Naive thymus-derived CD4-positive, alpha-beta T cell (primary cell): ENCODE measurements at regions of chr15 and their contacts with region 1.

Region 1: GRCh38 chr15:63600616-63601025 is 3.4 kb downstream of the FBXL22 start:
- DNase-seq: peak; percentile 85 to 95 (median 90)
- ATAC-seq: peak; percentile 93
- H3K4me3 ChIP-seq: peak overlapping the region; percentile 95
- H3K4me3 Mint-ChIP-seq: peak overlapping the region; percentile 91 to 99 (median 94)
- H3K27ac ChIP-seq: peak overlapping the region; percentile 80
- H3K27ac Mint-ChIP-seq: peak overlapping the region; percentile 90 to 96 (median 93)
- H3K4me1 ChIP-seq: peaks cover 22 to 27% of the 10 kb centered on the region in 2 donors
- H3K4me1 Mint-ChIP-seq: peaks cover 39 to 70% (median 66%) of the 10 kb centered on the region in 7 donors
- H3K27me3 ChIP-seq: no peaks in the 10 kb centered on the region
- H3K27me3 Mint-ChIP-seq: no peaks in the 10 kb centered on the region

Region 2: GRCh38 chr15:63277038-63277892 is 323.4 kb before region 1 on chr15 and contains the start of gene APH1B:
- CTCF ChIA-PET with region 1: no interaction called
- POLR2A ChIA-PET with region 1: no interaction called
- intact Hi-C with region 1: loop called (anchors 5 to 10 kb)
- DNase-seq: peak; percentile 62 to 80 (median 74)
- ATAC-seq: peak; percentile 92
- H3K4me3 ChIP-seq: peak within 1 kb of the TSS; percentile 71
- H3K4me3 Mint-ChIP-seq: peak within 1 kb of the TSS; percentile 78 to 93 (median 89)
- H3K27ac ChIP-seq: peak within 1 kb of the TSS; percentile 96
- H3K27ac Mint-ChIP-seq: peak within 1 kb of the TSS; percentile 75 to 98 (median 86)
- H3K4me1 ChIP-seq: peaks cover 10 to 21% of the 10 kb centered on the region in 2 donors
- H3K4me1 Mint-ChIP-seq: peaks cover 23 to 49% (median 46%) of the 10 kb centered on the region in 7 donors
- H3K27me3 ChIP-seq: no peaks in the 10 kb centered on the region
- H3K27me3 Mint-ChIP-seq: no peaks in the 10 kb centered on the region
- total RNA-seq, gene APH1B: 9.9 to 29.9 (median 17.6) TPM

Region 3: GRCh38 chr15:63473999-63474809 is 126.4 kb before region 1 on chr15:
- CTCF ChIA-PET with region 1: interaction called, 5 read pairs
- POLR2A ChIA-PET with region 1: interaction called, 12 read pairs
- intact Hi-C with region 1: loop called in 1 of 2 experiments (anchors 1 kb)
- DNase-seq: peak in 5 of 9 donors; percentile 36 to 76 (median 51)
- ATAC-seq: peak; percentile 86
- H3K4me3 ChIP-seq: no peak overlapping the region
- H3K4me3 Mint-ChIP-seq: peak overlapping the region in 8 of 10 donors; percentile 44 to 75 (median 65)
- H3K27ac ChIP-seq: peak overlapping the region; percentile 50
- H3K27ac Mint-ChIP-seq: peak overlapping the region; percentile 86 to 98 (median 94)
- H3K4me1 ChIP-seq: peaks cover 11 to 44% of the 10 kb centered on the region in 2 donors
- H3K4me1 Mint-ChIP-seq: peaks cover 32 to 70% (median 61%) of the 10 kb centered on the region in 7 donors
- H3K27me3 ChIP-seq: no peaks in the 10 kb centered on the region
- H3K27me3 Mint-ChIP-seq: no peaks in the 10 kb centered on the region

Region 4: GRCh38 chr15:63582718-63583426 is 17.7 kb before region 1 on chr15:
- CTCF ChIA-PET with region 1: interaction called, 5 read pairs
- POLR2A ChIA-PET with region 1: interaction called, 4 read pairs
- intact Hi-C with region 1: loop called in 1 of 2 experiments (anchors 2 kb)
- DNase-seq: no peak
- ATAC-seq: peak; percentile 10
- H3K4me3 ChIP-seq: no peak overlapping the region
- H3K4me3 Mint-ChIP-seq: no peak overlapping the region
- H3K27ac ChIP-seq: no peak overlapping the region
- H3K27ac Mint-ChIP-seq: peak overlapping the region in 8 of 9 donors; percentile 8 to 91 (median 64)
- H3K4me1 ChIP-seq: no peaks in the 10 kb centered on the region
- H3K4me1 Mint-ChIP-seq: peaks cover 8 to 34% (median 19%) of the 10 kb centered on the region in 7 donors
- H3K27me3 ChIP-seq: no peaks in the 10 kb centered on the region
- H3K27me3 Mint-ChIP-seq: no peaks in the 10 kb centered on the region

Region 5: DNA sequence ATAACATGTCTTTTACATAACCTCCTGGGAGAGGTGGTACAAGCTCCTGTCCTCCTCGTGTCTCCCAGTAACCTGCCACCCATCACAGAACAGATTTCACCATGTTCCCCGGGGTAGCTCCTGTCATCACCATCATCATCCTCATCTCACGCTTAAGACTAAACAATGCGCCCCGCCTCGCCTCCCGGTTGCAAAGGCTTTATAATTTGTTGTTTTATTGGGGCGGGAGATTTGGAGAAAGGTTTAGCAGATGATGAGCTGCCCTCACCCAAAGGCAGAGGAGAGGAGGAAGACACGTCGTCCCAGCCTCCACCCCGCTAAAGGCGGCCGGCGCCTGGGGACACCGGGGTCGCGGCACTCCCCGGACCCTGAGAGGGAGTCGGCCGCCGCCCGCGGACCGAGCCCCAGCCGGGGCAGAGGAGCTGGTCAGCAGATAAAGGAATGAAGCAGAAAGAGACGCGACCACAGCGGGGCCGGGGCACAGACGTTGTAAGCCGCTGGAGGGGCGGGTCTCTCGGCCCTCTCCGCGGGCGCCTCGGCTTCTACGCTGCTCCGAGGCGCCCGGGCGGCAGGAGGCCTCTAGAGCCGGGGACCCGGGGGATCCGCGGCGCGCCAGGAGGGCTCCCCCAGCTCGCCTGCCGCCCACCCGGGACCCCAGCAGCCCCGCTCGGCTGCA is 232.5 kb after region 1 on chr15:
- CTCF ChIA-PET with region 1: no interaction called
- POLR2A ChIA-PET with region 1: no interaction called
- intact Hi-C with region 1: loop called (anchors 5 kb)
- DNase-seq: peak; percentile 11 to 55 (median 38)
- ATAC-seq: peak; percentile 48
- H3K4me3 ChIP-seq: peak overlapping the region; percentile 68
- H3K4me3 Mint-ChIP-seq: peak overlapping the region; percentile 86 to 98 (median 94)
- H3K27ac ChIP-seq: peak overlapping the region; percentile 99
- H3K27ac Mint-ChIP-seq: peak overlapping the region; percentile 94 to 99 (median 97)
- H3K4me1 ChIP-seq: peaks cover 30 to 31% of the 10 kb centered on the region in 2 donors
- H3K4me1 Mint-ChIP-seq: peaks cover 46 to 66% (median 56%) of the 10 kb centered on the region in 7 donors
- H3K27me3 ChIP-seq: no peaks in the 10 kb centered on the region
- H3K27me3 Mint-ChIP-seq: peaks cover 0 to 9% (median 0%) of the 10 kb centered on the region in 5 donors

Region 6: DNA sequence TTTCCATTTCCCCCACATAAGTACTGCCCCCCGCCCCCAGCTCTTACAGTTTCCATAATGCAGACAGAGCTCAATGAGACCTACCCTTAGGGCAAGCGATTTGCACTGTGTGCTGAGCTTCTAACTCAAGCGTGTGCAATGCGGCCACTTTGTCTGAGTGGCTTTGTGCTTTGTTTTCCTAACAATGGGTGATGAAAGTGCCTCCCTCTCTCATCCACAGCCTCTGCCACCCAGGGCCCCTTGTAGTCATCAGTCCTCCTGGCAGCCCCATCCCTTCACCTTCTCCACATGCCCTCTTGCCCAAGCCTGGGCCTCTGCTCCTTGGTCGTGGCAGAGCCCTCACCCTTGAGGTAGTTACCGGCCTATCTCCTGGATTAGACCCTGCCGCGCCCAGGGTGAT is 428.5 kb after region 1 on chr15:
- CTCF ChIA-PET with region 1: no interaction called
- POLR2A ChIA-PET with region 1: no interaction called
- intact Hi-C with region 1: no loop called
- DNase-seq: no peak
- ATAC-seq: no peak
- H3K4me3 ChIP-seq: no peak overlapping the region
- H3K4me3 Mint-ChIP-seq: no peak overlapping the region
- H3K27ac ChIP-seq: no peak overlapping the region
- H3K27ac Mint-ChIP-seq: peak overlapping the region in 1 of 9 donors; percentile 53
- H3K4me1 ChIP-seq: peaks cover 0 to 10% of the 10 kb centered on the region in 2 donors
- H3K4me1 Mint-ChIP-seq: peaks cover 4 to 20% (median 7%) of the 10 kb centered on the region in 7 donors
- H3K27me3 ChIP-seq: no peaks in the 10 kb centered on the region
- H3K27me3 Mint-ChIP-seq: no peaks in the 10 kb centered on the region